PC-9 (cell line): ENCODE measurements at regions of chr4 and their contacts with region 1.

Region 1: GRCh38 chr4:11497212-11497806 is 68.6 kb upstream of the HS3ST1 start:
- DNase-seq: no peak
- H3K4me3 ChIP-seq: no peak overlapping the region
- H3K27ac ChIP-seq: peak overlapping the region; percentile 87
- H3K4me1 ChIP-seq: peaks cover 7% of the 10 kb centered on the region; the same call in 1 of the 2 replicates
- H3K27me3 ChIP-seq: no peaks in the 10 kb centered on the region
- CTCF ChIP-seq: 0 out of 2 replicates have a peak, but pooled peaks have one; percentile 34

Region 2: DNA sequence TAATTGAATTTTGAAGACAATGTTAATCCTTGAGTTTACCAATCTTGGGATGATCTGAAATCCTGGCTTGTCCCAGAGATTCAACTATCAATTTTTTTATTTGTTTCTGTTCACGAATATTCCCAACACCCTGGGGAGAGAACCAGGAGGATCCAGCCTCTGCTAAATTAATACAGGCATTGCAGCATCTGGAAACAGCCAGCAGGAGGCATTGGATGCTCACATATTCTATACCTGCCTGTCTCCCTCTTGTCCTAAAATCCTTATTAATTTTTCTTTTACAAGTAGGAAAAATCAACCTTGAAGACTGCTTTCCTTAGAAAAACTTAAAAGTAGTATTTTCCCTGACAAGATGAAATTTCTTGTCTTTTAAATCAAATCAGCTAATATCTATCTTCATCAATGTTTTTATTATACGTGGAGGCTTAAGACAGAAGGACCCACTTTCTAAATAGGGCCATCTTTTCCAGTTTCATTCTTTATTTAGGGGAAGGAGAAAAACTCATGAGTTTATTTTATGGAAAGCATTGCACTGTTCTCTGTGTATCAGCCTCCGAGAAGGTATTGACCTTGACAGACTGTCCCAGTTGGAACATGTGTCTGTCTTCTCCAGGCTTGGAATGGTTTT is 915.1 kb before region 1 on chr4:
- CTCF ChIA-PET with region 1: no interaction called
- POLR2A ChIA-PET with region 1: no interaction called
- intact Hi-C with region 1: loop called (anchors 2 kb)
- DNase-seq: peak in 1 of 2 experiments; percentile 37
- H3K4me3 ChIP-seq: no peak overlapping the region
- H3K27ac ChIP-seq: no peak overlapping the region
- H3K4me1 ChIP-seq: no peaks in the 10 kb centered on the region
- H3K27me3 ChIP-seq: no peaks in the 10 kb centered on the region
- CTCF ChIP-seq: peak; percentile 85

Region 3: DNA sequence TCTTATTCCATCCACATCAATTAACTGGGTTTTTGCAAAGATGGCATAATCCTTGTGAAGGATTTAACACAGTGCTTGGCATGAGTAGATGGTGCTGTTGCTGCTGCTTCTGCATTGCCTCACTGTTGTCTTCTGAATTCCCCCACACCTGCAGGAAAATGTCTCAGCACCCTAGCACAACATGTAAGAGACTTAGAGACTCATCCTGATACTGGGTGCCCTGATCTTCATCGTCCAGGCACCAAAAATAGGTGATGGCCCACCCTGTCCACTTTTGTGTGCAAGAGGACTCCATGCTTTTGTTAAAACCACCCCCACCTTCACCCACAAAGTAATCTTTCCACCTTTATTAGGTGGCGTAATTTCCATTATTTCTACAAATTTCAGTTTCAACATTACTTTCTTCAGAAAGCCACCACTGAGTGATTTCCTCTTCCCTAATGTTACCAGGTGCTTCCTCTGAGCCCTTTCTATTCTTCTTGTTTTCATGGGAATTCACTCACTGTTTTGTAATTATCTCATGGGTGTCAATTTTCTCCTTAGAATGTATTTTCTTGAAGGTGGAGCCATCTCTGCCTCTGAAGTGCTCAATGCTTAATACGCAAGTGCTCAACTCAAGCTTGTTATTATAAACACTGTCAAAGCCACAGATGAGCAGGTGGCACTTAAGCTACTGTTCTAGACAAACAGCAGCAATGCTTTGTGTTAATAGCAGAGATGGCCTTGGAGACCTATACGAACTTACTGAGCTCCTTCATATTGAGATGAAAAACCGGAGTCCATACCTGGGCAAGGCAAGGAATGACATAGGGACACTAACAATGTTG is 158.1 kb before region 1 on chr4:
- CTCF ChIA-PET with region 1: no interaction called
- POLR2A ChIA-PET with region 1: no interaction called
- intact Hi-C with region 1: no loop called
- DNase-seq: no peak
- H3K4me3 ChIP-seq: no peak overlapping the region
- H3K27ac ChIP-seq: no peak overlapping the region
- H3K4me1 ChIP-seq: no peaks in the 10 kb centered on the region
- H3K27me3 ChIP-seq: no peaks in the 10 kb centered on the region
- CTCF ChIP-seq: no peak